Prostate gland (tissue), 2 donors: ENCODE measurements at regions of chr4 and their contacts with region 1.

Region 1: GRCh38 chr4:153204247-153205027 is at the start of gene TRIM2:
- DNase-seq: peak; percentile 79
- H3K4me3 ChIP-seq: peak within 1 kb of the TSS; percentile 5 to 21
- H3K27ac ChIP-seq: peak within 1 kb of the TSS; percentile 37 to 49
- H3K4me1 ChIP-seq: no peaks in the 10 kb centered on the region
- H3K27me3 ChIP-seq: no peaks in the 10 kb centered on the region
- CTCF ChIP-seq: no peak
- POLR2A ChIP-seq: peak; percentile 40
- total RNA-seq, gene TRIM2: 54.5 to 70.4 TPM

Region 2: GRCh38 chr4:153318696-153319320 is 114.4 kb after region 1 on chr4:
- intact Hi-C with region 1: loop called (anchors 2 kb)
- DNase-seq: peak; percentile 39
- H3K4me3 ChIP-seq: no peak overlapping the region
- H3K27ac ChIP-seq: no peak overlapping the region
- H3K4me1 ChIP-seq: no peaks in the 10 kb centered on the region
- H3K27me3 ChIP-seq: no peaks in the 10 kb centered on the region
- CTCF ChIP-seq: peak in 3 of 4 experiments; percentile 60 to 74 (median 71)
- POLR2A ChIP-seq: no peak

Region 3: DNA sequence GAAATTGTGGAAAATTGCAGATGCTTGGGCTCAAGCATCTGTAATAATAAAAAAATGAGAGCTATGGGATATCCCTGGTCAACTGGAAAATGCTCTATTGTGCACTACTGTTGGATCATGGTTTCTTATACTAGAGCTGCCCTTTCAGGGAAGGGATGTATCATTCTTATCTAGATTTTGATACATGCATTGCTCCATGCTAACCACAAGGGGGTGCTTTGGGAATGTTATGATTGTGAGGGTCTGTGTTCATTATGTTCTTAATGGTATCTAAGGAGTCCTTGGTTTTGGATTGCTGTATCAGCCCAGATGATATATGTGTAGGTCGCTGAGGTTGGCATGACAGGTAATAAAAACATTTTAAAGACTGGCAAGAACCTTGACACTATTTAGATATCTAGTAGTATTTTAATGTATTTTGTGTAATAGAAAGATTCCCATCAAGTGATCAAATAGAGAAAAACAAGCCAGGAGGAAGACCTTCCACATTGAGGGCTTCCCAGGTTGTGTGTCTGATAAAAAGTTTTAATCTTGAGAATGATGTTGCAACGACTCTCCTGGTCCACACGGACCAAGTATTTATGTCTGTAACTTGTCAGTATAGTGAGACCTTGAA is 430.4 kb after region 1 on chr4:
- intact Hi-C with region 1: loop called (anchors 10 kb)
- DNase-seq: no peak
- H3K4me3 ChIP-seq: no peak overlapping the region
- H3K27ac ChIP-seq: no peak overlapping the region
- H3K4me1 ChIP-seq: no peaks in the 10 kb centered on the region
- H3K27me3 ChIP-seq: no peaks in the 10 kb centered on the region
- CTCF ChIP-seq: peak in 3 of 4 experiments; percentile 47 to 57 (median 53)
- POLR2A ChIP-seq: no peak